ENCODE measurements at regions of chr7 and their contacts with region 1.

Region 1: DNA sequence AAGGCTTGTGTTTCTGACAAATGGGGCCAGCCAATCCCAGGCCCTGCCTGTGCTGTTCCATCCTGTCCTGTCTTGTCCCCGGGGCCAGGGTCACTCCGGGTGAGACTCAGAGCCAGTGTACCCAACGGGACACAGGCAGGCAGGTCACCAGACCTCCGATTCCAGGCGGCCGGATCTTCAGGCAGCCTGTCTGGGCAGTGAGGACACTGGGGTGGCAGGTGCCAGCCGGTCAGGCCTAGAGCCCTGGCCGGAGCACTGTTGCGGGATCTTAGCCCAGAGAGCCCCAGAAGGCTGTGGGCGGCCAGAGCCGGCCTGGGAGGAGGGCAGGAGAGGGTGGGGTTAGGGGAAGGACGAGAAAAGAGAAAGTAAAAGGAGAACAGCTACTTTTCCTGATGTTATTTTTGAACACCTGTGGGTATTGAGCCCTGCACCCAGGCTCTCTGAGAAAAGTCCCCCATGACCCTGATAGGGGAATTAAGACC is 134.3 kb upstream of the TNRC18 start:
- DNase-seq: no peak
- ATAC-seq: no peak
- H3K4me3 ChIP-seq: peak overlapping the region; percentile 2; the same call in 1 of the 3 replicates
- H3K27ac ChIP-seq: peak overlapping the region; percentile 97 to 100
- H3K4me1 ChIP-seq: peaks cover 52% of the 10 kb centered on the region
- CTCF ChIP-seq: no peak
- EP300 ChIP-seq: no peak
- POLR2A ChIP-seq: no peak
- RAD21 ChIP-seq: no peak

Region 2: GRCh38 chr7:5596046-5596895 is 38.3 kb after region 1 on chr7:
- CTCF ChIA-PET with region 1: interaction called, 12 read pairs
- POLR2A ChIA-PET with region 1: no interaction called
- DNase-seq: peak; percentile 84 to 91
- ATAC-seq: peak; percentile 57 to 70
- H3K4me3 ChIP-seq: peak overlapping the region; percentile 78
- H3K27ac ChIP-seq: peak overlapping the region; percentile 90 to 98
- H3K4me1 ChIP-seq: peaks cover 55% of the 10 kb centered on the region
- CTCF ChIP-seq: no peak
- EP300 ChIP-seq: peak in 1 of 2 experiments; percentile 32; a peak in 1 of 5 replicates
- POLR2A ChIP-seq: peak; percentile 20; the same call in 1 of the 2 replicates
- RAD21 ChIP-seq: no peak

Region 3: GRCh38 chr7:5704534-5704922 is 146.6 kb after region 1 on chr7:
- CTCF ChIA-PET with region 1: interaction called, 24 read pairs
- POLR2A ChIA-PET with region 1: no interaction called
- DNase-seq: peak; percentile 71 to 77
- ATAC-seq: peak; percentile 87 to 89
- H3K4me3 ChIP-seq: no peak overlapping the region
- H3K27ac ChIP-seq: peak overlapping the region in 1 of 2 experiments; percentile 41; a peak in 4 of 6 replicates
- H3K4me1 ChIP-seq: peaks cover 38% of the 10 kb centered on the region
- CTCF ChIP-seq: peak; percentile 97
- EP300 ChIP-seq: no peak
- POLR2A ChIP-seq: no peak
- RAD21 ChIP-seq: peak; percentile 92 to 96

Measured in A549 (cell line).